MCF 10A (cell line): ENCODE measurements at regions of chr20 and their contacts with region 1.

Region 1: GRCh38 chr20:4956200-4956810 is 45.0 kb downstream of the SLC23A2 start:
- DNase-seq: peak; percentile 62
- H3K4me3 Mint-ChIP-seq: no peak overlapping the region
- H3K27ac Mint-ChIP-seq: no peak overlapping the region
- H3K4me1 Mint-ChIP-seq: peaks cover 2% of the 10 kb centered on the region
- H3K27me3 Mint-ChIP-seq: no peaks in the 10 kb centered on the region
- CTCF ChIP-seq: peak; percentile 71

Region 2: DNA sequence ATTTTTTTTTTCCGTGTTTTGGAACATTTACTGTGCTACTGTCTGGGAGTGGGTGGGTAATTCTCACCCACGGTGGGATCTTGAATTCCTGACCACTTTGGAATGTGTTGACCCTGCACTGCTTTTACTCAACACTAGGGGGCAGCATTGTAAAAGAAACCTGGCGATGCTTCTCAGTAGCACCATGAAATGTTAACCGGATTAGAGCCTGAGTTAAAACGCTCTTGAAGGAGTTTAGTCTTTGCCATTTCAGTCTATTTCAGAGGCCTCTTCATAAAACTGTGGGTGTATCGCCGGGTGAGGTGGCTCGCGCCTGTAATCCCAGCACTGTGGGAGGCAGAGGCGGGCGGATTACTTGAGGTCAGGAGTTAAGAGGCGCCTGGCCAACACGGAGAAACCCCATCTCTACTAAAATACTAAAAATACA is 349.0 kb before region 1 on chr20:
- CTCF ChIA-PET with region 1: interaction called, 4 read pairs
- POLR2A ChIA-PET with region 1: no interaction called
- intact Hi-C with region 1: loop called (anchors 2 kb)
- DNase-seq: peak; percentile 71
- H3K4me3 Mint-ChIP-seq: no peak overlapping the region
- H3K27ac Mint-ChIP-seq: no peak overlapping the region
- H3K4me1 Mint-ChIP-seq: peaks cover 2% of the 10 kb centered on the region
- H3K27me3 Mint-ChIP-seq: no peaks in the 10 kb centered on the region
- CTCF ChIP-seq: peak; percentile 78

Region 3: DNA sequence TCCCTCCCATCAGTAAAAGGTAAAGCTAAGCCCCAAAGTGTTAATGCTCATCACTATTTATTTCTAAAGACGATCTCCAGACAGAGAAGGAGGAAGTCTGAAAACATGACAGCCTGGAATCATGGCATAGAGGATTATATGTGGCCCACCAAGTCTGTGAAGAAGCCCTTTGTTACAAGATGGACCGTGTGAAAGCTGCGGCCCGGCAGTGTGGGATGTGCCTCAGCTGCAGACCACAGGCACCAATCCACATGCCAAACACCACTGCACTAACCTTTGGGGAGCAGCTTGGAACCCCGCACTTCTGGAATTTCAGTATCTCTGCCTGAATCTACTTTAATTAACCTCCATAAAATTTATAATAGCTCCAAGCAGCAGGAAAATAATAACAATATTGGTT is 45.4 kb before region 1 on chr20:
- CTCF ChIA-PET with region 1: interaction called, 21 read pairs
- POLR2A ChIA-PET with region 1: no interaction called
- intact Hi-C with region 1: no loop called
- DNase-seq: no peak
- H3K4me3 Mint-ChIP-seq: no peak overlapping the region
- H3K27ac Mint-ChIP-seq: no peak overlapping the region
- H3K4me1 Mint-ChIP-seq: no peaks in the 10 kb centered on the region
- H3K27me3 Mint-ChIP-seq: no peaks in the 10 kb centered on the region
- CTCF ChIP-seq: no peak

Region 4: DNA sequence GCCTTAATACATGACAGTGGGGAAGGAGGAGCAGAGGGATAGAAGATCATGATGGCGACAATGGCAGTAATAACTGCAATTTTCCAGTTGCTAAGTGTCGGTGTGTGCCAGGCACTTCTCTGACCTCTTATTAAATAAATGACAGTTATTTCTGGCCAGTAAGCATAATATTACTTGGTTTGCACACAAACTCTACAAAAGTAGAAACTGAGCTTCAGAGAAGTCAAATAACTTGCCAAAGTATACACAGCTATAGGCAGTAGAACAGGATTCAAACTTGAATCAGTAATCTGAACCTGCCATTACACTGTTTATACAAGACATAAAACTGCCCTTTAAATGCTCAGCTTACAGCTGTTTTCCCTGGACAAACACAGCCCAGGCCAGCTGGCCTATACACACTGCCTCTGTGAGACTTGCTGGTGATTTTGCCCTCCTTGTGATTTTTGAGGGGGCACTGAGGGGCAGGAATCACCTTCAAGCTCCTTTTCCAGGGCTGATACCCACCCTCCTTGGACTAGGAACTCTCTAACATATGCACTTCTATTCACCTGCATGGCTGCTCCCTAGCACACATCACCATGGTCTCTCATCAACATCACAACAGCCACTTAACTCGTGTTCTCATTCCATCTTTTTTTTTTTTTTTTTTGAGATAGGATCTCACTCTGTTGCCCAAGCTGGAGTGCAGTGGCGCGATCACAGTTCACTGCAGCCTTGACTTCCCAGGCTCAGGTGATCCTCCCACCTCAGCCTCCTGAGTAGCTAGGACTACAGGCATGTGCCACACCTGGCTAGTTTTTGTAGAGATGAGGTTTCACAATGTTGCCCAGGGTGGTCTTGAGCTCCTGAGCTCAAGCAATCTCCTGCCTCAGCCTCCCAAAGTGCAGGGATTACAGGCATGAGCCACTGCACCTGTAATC is 18.6 kb before region 1 on chr20:
- CTCF ChIA-PET with region 1: interaction called, 11 read pairs
- POLR2A ChIA-PET with region 1: no interaction called
- intact Hi-C with region 1: no loop called
- DNase-seq: no peak
- H3K4me3 Mint-ChIP-seq: no peak overlapping the region
- H3K27ac Mint-ChIP-seq: no peak overlapping the region
- H3K4me1 Mint-ChIP-seq: no peaks in the 10 kb centered on the region
- H3K27me3 Mint-ChIP-seq: no peaks in the 10 kb centered on the region
- CTCF ChIP-seq: no peak

Region 5: GRCh38 chr20:4966826-4967751 is 10.8 kb after region 1 on chr20:
- CTCF ChIA-PET with region 1: interaction called, 49 read pairs
- POLR2A ChIA-PET with region 1: interaction called, 4 read pairs
- intact Hi-C with region 1: no loop called
- DNase-seq: no peak
- H3K4me3 Mint-ChIP-seq: no peak overlapping the region
- H3K27ac Mint-ChIP-seq: no peak overlapping the region
- H3K4me1 Mint-ChIP-seq: peaks cover 3% of the 10 kb centered on the region
- H3K27me3 Mint-ChIP-seq: no peaks in the 10 kb centered on the region
- CTCF ChIP-seq: no peak

Region 6: DNA sequence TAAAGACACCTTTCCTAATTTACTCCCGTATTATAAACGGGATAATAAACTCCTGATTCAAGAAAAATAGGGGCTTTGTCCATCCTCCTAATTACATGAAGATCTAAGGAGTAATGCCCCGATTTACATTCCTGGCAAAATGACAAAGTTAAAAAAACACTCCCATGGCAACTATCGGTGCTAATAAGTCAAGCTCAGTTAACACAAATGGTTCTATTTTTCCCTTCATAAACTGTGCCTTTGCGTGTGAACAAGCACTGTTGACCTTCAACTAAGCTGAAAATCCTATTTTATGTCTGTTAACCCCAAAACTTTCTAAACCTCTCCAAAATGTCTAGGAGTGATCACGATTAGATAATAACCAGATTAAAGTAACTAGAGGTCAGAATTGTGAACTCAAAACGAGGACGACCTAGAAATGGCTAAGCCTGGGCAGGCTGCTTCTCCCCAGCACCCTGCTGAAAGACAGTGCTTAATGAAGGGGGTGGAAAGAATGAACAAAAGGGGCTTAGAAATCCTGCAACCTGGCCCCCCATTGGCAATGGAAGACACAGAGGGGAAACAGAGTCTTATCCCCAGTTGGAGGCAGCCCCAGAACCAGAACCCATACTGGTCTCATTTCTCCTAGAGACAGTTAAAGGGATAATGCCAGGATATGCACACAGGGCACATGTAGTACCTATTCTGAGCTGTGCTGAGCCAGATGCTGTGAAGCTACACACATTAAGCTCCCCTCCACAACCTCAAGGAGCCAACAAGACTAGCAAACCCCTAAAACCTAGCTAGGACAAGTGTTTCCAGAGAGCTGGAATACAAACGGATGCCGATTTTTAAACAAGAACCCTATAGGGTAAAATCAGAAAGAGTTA is 22.0 kb after region 1 on chr20:
- CTCF ChIA-PET with region 1: interaction called, 13 read pairs
- POLR2A ChIA-PET with region 1: interaction called, 4 read pairs
- intact Hi-C with region 1: no loop called
- DNase-seq: no peak
- H3K4me3 Mint-ChIP-seq: no peak overlapping the region
- H3K27ac Mint-ChIP-seq: no peak overlapping the region
- H3K4me1 Mint-ChIP-seq: no peaks in the 10 kb centered on the region
- H3K27me3 Mint-ChIP-seq: no peaks in the 10 kb centered on the region
- CTCF ChIP-seq: no peak